A673 (cell line): ENCODE measurements at regions of chr6 and their contacts with region 1.

Region 1: GRCh38 chr6:134063966-134064445 is 11.6 kb upstream of the SLC2A12 start:
- DNase-seq: peak; percentile 81
- H3K4me3 ChIP-seq: no peak overlapping the region
- H3K27ac ChIP-seq: no peak overlapping the region
- H3K4me1 ChIP-seq: no peaks in the 10 kb centered on the region
- H3K27me3 ChIP-seq: no peaks in the 10 kb centered on the region
- CTCF ChIP-seq: peak; percentile 90

Region 2: GRCh38 chr6:133286765-133287164 is 777.2 kb before region 1 on chr6:
- CTCF ChIA-PET with region 1: no interaction called
- POLR2A ChIA-PET with region 1: no interaction called
- intact Hi-C with region 1: no loop called
- DNase-seq: peak; percentile 80
- H3K4me3 ChIP-seq: no peak overlapping the region
- H3K27ac ChIP-seq: no peak overlapping the region
- H3K4me1 ChIP-seq: peaks cover 5% of the 10 kb centered on the region
- H3K27me3 ChIP-seq: no peaks in the 10 kb centered on the region
- CTCF ChIP-seq: peak; percentile 72

Region 3: GRCh38 chr6:133973109-133973971 is 90.7 kb before region 1 on chr6:
- CTCF ChIA-PET with region 1: interaction called, 11 read pairs
- POLR2A ChIA-PET with region 1: no interaction called
- intact Hi-C with region 1: loop called (anchors 5 kb)
- DNase-seq: peak; percentile 65
- H3K4me3 ChIP-seq: no peak overlapping the region
- H3K27ac ChIP-seq: no peak overlapping the region
- H3K4me1 ChIP-seq: peaks cover 4% of the 10 kb centered on the region
- H3K27me3 ChIP-seq: no peaks in the 10 kb centered on the region
- CTCF ChIP-seq: peak; percentile 76

Region 4: DNA sequence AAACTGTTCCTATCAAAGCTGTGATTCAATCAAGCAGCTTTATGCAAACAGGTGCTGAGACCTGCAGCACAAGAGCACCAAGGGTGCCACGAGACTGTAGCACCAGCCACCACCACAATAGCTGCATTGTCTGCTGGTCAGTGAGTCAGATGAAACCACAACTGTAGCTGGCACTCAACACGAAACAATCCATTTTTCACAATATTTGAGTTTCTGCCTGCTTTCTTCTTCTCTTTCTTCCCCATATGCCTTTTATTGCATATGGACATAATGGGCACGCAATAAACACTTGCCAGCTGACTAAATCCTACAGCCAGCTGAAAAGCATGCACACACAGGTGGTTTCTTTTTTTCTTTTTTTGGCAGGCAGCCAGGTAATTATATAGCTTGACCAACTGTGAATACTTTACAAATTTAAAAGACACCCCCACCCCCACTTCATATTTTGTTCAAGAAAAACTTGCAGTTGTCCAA is 28.1 kb before region 1 on chr6:
- CTCF ChIA-PET with region 1: no interaction called
- POLR2A ChIA-PET with region 1: interaction called, 19 read pairs
- intact Hi-C with region 1: no loop called
- DNase-seq: no peak
- H3K4me3 ChIP-seq: no peak overlapping the region
- H3K27ac ChIP-seq: no peak overlapping the region
- H3K4me1 ChIP-seq: no peaks in the 10 kb centered on the region
- H3K27me3 ChIP-seq: no peaks in the 10 kb centered on the region
- CTCF ChIP-seq: no peak

Region 5: GRCh38 chr6:134047673-134048072 is 16.3 kb before region 1 on chr6:
- CTCF ChIA-PET with region 1: interaction called, 10 read pairs
- POLR2A ChIA-PET with region 1: no interaction called
- intact Hi-C with region 1: no loop called
- DNase-seq: no peak
- H3K4me3 ChIP-seq: no peak overlapping the region
- H3K27ac ChIP-seq: no peak overlapping the region
- H3K4me1 ChIP-seq: no peaks in the 10 kb centered on the region
- H3K27me3 ChIP-seq: no peaks in the 10 kb centered on the region
- CTCF ChIP-seq: no peak